ENCODE measurements at regions of chr3 and their contacts with region 1.

Region 1: DNA sequence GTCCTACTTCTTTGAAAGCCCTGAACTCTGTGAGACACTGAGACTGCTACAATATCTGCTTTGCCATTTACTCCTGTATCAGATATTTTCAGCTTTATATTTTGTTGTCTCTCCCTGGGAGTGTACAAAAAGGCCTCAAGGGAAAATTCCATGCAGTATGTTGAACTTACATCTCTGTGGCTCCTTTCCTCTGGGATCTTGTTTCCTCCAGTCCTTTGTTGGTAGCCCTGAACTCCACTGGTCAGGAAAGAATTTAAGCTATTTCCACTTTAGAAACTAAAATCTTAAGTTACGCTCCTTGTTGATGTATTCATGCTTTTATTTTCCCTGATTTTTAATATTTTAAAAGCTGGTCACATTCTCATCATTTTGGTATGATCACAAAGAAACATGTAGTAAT is 277.9 kb downstream of the FHIT start:
- DNase-seq: no peak
- ATAC-seq: no peak
- H3K4me3 ChIP-seq: no peak overlapping the region
- H3K27ac ChIP-seq: no peak overlapping the region
- H3K4me1 ChIP-seq: no peaks in the 10 kb centered on the region
- H3K27me3 ChIP-seq: no peaks in the 10 kb centered on the region
- CTCF ChIP-seq: no peak

Region 2: DNA sequence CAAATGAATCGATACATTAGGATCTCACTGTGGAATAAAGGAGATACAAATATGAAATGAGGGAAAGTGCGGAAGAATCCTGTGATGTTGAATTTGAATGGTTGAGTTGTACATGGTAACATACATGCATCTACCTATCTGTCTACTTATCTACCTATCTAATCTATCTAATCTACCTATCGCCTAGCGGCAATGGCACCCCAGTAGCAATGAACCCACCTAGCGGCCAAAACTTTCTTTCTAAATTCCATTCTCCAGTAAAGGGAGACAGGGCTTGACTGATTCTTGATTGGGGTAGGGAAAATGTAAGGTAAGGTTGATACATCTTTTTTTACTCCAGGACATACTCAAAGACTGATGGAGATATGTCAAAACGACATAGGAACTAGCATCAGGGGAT is 67.0 kb before region 1 on chr3:
- intact Hi-C with region 1: no loop called
- DNase-seq: no peak
- ATAC-seq: no peak
- H3K4me3 ChIP-seq: no peak overlapping the region
- H3K27ac ChIP-seq: no peak overlapping the region
- H3K4me1 ChIP-seq: no peaks in the 10 kb centered on the region
- H3K27me3 ChIP-seq: no peaks in the 10 kb centered on the region
- CTCF ChIP-seq: no peak

Region 3: DNA sequence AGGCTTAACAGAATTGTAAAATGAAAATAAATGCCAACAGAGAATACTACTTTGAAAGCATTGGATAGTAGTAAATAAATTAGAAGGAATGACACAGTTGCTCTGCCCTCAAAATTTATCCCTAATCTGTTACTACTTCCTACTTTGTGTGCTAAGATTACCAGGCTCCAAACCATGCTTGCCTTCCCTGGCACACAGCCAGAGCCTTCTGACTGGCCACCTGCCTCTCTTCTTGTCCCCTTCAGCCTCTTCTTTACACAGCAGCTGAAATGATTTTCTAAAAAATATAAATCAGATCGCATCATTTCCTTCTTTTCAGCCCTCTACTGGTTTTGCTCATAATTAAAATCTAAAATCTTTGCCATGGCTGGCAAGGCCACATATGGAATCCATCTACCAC is 56.2 kb before region 1 on chr3:
- intact Hi-C with region 1: loop called in 1 of 2 experiments (anchors 2 kb)
- DNase-seq: no peak
- ATAC-seq: no peak
- H3K4me3 ChIP-seq: no peak overlapping the region
- H3K27ac ChIP-seq: no peak overlapping the region
- H3K4me1 ChIP-seq: no peaks in the 10 kb centered on the region
- H3K27me3 ChIP-seq: no peaks in the 10 kb centered on the region
- CTCF ChIP-seq: no peak